ENCODE measurements at regions of chr18 and their contacts with region 1.

Region 1: GRCh38 chr18:22563098-22563707 is 145.5 kb upstream of the CTAGE1 start:
- DNase-seq: peak in 1 of 9 donors; percentile 0
- ATAC-seq: peak; percentile 67
- H3K4me3 ChIP-seq: no peak overlapping the region
- H3K4me3 Mint-ChIP-seq: no peak overlapping the region
- H3K27ac ChIP-seq: no peak overlapping the region
- H3K27ac Mint-ChIP-seq: no peak overlapping the region
- H3K4me1 ChIP-seq: peaks cover 0 to 3% of the 10 kb centered on the region in 2 donors
- H3K4me1 Mint-ChIP-seq: peaks cover 0 to 8% (median 2%) of the 10 kb centered on the region in 7 donors
- H3K27me3 ChIP-seq: peaks cover 0 to 11% of the 10 kb centered on the region in 2 donors
- H3K27me3 Mint-ChIP-seq: peaks cover 25 to 47% (median 33%) of the 10 kb centered on the region in 5 donors

Region 2: GRCh38 chr18:21897811-21898210 is 665.4 kb before region 1 on chr18:
- CTCF ChIA-PET with region 1: no interaction called
- POLR2A ChIA-PET with region 1: no interaction called
- intact Hi-C with region 1: loop called in 1 of 2 experiments (anchors 5 kb)
- DNase-seq: peak in 1 of 9 donors; percentile 3
- ATAC-seq: no peak
- H3K4me3 ChIP-seq: no peak overlapping the region
- H3K4me3 Mint-ChIP-seq: no peak overlapping the region
- H3K27ac ChIP-seq: no peak overlapping the region
- H3K27ac Mint-ChIP-seq: no peak overlapping the region
- H3K4me1 ChIP-seq: no peaks in the 10 kb centered on the region
- H3K4me1 Mint-ChIP-seq: peaks cover 0 to 7% (median 3%) of the 10 kb centered on the region in 7 donors
- H3K27me3 ChIP-seq: no peaks in the 10 kb centered on the region
- H3K27me3 Mint-ChIP-seq: peaks cover 10 to 27% (median 17%) of the 10 kb centered on the region in 5 donors

Region 3: DNA sequence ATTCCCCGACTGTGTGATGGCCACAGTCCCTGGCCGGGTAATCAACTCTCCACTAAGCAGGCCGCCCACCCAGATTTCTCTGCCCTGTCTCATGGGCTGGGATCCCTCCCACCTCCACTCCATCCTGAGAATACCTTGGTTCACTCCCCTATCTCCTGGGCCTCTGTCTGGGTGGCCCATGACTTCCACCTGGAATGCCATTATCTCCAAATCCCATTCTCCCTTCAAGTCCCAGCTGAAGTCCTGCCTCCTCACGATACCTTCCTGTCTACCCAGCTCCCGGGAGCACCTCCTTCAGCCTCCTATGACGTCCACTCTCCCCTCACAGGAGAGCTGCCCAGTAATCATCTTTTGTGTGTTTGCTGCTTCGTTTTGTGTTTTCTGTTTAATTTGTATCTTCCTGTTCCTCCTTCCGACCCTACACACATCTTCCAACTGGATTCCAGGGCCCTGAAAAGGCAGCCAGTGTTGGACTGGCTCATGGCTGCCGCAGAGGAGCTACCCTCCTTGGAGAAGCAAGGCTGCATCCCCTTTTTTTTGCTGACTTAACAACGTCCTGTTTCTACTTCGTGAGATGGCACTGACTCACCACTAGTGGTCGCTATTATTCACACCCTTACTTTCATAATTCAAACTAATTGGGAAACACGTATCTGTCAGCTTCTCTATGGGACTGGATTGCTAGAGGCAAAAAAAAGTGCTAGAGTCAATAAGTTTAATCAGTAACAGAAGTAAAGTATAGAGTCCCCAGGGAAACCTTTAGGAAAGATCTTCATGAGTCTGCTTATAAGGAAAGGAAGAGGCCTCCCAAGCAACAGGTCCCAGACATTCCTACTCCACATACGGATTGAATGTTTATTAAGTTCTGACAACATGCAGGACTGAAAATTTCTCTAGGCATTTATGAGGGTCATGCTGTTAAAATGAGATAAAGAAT is 565.7 kb before region 1 on chr18:
- CTCF ChIA-PET with region 1: no interaction called
- POLR2A ChIA-PET with region 1: no interaction called
- intact Hi-C with region 1: loop called in 1 of 2 experiments (anchors 5 kb)
- DNase-seq: peak in 5 of 9 donors; percentile 3 to 21 (median 14)
- ATAC-seq: peak; percentile 70
- H3K4me3 ChIP-seq: no peak overlapping the region
- H3K4me3 Mint-ChIP-seq: no peak overlapping the region
- H3K27ac ChIP-seq: no peak overlapping the region
- H3K27ac Mint-ChIP-seq: no peak overlapping the region
- H3K4me1 ChIP-seq: no peaks in the 10 kb centered on the region
- H3K4me1 Mint-ChIP-seq: peaks cover 0 to 6% (median 3%) of the 10 kb centered on the region in 7 donors
- H3K27me3 ChIP-seq: no peaks in the 10 kb centered on the region
- H3K27me3 Mint-ChIP-seq: peaks cover 0 to 4% (median under 1%) of the 10 kb centered on the region in 5 donors

Region 4: GRCh38 chr18:22169007-22169864 is 394.0 kb before region 1 on chr18 and contains the start of gene GATA6:
- CTCF ChIA-PET with region 1: no interaction called
- POLR2A ChIA-PET with region 1: no interaction called
- intact Hi-C with region 1: loop called in 1 of 2 experiments (anchors 5 kb)
- DNase-seq: peak in 1 of 9 donors; percentile 31
- ATAC-seq: peak; percentile 63
- H3K4me3 ChIP-seq: peak within 1 kb of the TSS; percentile 38
- H3K4me3 Mint-ChIP-seq: peak within 1 kb of the TSS; percentile 52 to 87 (median 80)
- H3K27ac ChIP-seq: no peak within 1 kb of the TSS
- H3K27ac Mint-ChIP-seq: peak within 1 kb of the TSS in 1 of 9 donors; percentile 81
- H3K4me1 ChIP-seq: peaks cover 0 to 19% of the 10 kb centered on the region in 2 donors
- H3K4me1 Mint-ChIP-seq: peaks cover 0 to 23% (median 20%) of the 10 kb centered on the region in 7 donors
- H3K27me3 ChIP-seq: peaks cover 16 to 28% of the 10 kb centered on the region in 2 donors
- H3K27me3 Mint-ChIP-seq: peaks cover 60 to 79% (median 65%) of the 10 kb centered on the region in 5 donors
- total RNA-seq, gene GATA6: 0.19 to 0.44 TPM in 2 of 5 experiments, not detected in the others

Region 5: DNA sequence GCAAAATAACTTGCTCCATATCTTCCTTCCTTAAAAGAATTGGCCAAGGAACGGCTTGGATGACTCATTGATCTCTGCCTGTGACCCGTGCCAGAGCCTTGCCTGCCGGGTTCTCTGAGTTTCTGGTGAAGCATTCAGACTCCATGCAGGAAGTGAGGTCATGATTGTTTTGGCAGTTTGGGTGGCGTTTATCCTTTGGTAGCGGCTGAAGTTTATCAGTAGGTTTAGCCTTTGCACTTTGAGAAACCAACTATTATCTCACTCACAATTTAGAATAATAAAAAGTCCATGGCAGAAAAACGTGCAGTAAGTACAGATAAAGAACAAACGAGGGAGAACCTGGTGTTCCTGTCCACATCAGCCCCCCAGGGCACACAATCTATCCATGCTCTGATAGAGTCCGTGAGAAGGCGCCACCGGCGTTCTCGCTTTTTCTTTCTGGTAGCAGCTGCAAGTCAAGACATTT is 130.5 kb before region 1 on chr18:
- CTCF ChIA-PET with region 1: no interaction called
- POLR2A ChIA-PET with region 1: no interaction called
- intact Hi-C with region 1: no loop called
- DNase-seq: no peak
- ATAC-seq: no peak
- H3K4me3 ChIP-seq: no peak overlapping the region
- H3K4me3 Mint-ChIP-seq: no peak overlapping the region
- H3K27ac ChIP-seq: no peak overlapping the region
- H3K27ac Mint-ChIP-seq: no peak overlapping the region
- H3K4me1 ChIP-seq: peaks cover 0 to 12% of the 10 kb centered on the region in 2 donors
- H3K4me1 Mint-ChIP-seq: peaks cover 0 to 5% (median 0%) of the 10 kb centered on the region in 7 donors
- H3K27me3 ChIP-seq: no peaks in the 10 kb centered on the region
- H3K27me3 Mint-ChIP-seq: no peaks in the 10 kb centered on the region

Region 6: DNA sequence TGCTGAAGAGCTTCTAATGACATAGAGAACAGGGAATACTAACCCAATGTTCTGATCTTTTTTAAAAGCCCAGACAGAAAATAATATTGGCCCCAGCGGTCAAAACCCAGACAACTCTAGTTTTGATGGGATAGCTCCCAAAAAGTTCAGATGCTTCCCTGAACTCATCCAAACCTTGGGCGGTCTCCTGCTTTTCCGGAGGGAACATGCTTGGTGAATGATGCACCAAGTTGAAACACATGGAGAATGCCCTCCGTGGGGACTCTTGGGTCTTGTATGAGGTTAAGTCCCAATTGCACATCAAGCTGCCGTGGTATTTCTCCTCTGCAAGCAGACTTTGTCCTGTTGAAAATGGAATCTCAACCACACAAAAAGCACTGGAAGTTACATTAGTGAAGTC is 24.8 kb before region 1 on chr18:
- CTCF ChIA-PET with region 1: no interaction called
- POLR2A ChIA-PET with region 1: no interaction called
- intact Hi-C with region 1: no loop called
- DNase-seq: no peak
- ATAC-seq: no peak
- H3K4me3 ChIP-seq: no peak overlapping the region
- H3K4me3 Mint-ChIP-seq: no peak overlapping the region
- H3K27ac ChIP-seq: no peak overlapping the region
- H3K27ac Mint-ChIP-seq: no peak overlapping the region
- H3K4me1 ChIP-seq: no peaks in the 10 kb centered on the region
- H3K4me1 Mint-ChIP-seq: no peaks in the 10 kb centered on the region
- H3K27me3 ChIP-seq: no peaks in the 10 kb centered on the region
- H3K27me3 Mint-ChIP-seq: peaks cover 0 to 4% (median 0%) of the 10 kb centered on the region in 5 donors

Measured in naive thymus-derived CD4-positive, alpha-beta T cell (primary cell).